Calu3 (cell line): ENCODE measurements at regions of chr14 and their contacts with region 1.

Region 1: GRCh38 chr14:54175298-54175942 is 218.8 kb upstream of the BMP4 start:
- DNase-seq: peak; percentile 80
- H3K4me3 Mint-ChIP-seq: no peak overlapping the region
- H3K27ac Mint-ChIP-seq: no peak overlapping the region
- H3K4me1 Mint-ChIP-seq: peaks cover 30% of the 10 kb centered on the region
- H3K27me3 Mint-ChIP-seq: no peaks in the 10 kb centered on the region
- CTCF ChIP-seq: peak; percentile 64

Region 2: GRCh38 chr14:53316499-53316898 is 858.9 kb before region 1 on chr14:
- CTCF ChIA-PET with region 1: no interaction called
- intact Hi-C with region 1: no loop called
- DNase-seq: no peak
- H3K4me3 Mint-ChIP-seq: no peak overlapping the region
- H3K27ac Mint-ChIP-seq: no peak overlapping the region
- H3K4me1 Mint-ChIP-seq: no peaks in the 10 kb centered on the region
- H3K27me3 Mint-ChIP-seq: no peaks in the 10 kb centered on the region
- CTCF ChIP-seq: no peak

Region 3: GRCh38 chr14:53432378-53432802 is 743.0 kb before region 1 on chr14:
- CTCF ChIA-PET with region 1: no interaction called
- intact Hi-C with region 1: loop called (anchors 1 kb)
- DNase-seq: peak; percentile 49
- H3K4me3 Mint-ChIP-seq: no peak overlapping the region
- H3K27ac Mint-ChIP-seq: no peak overlapping the region
- H3K4me1 Mint-ChIP-seq: no peaks in the 10 kb centered on the region
- H3K27me3 Mint-ChIP-seq: peaks cover 16% of the 10 kb centered on the region
- CTCF ChIP-seq: peak; percentile 69

Region 4: GRCh38 chr14:53842938-53843337 is 332.5 kb before region 1 on chr14:
- CTCF ChIA-PET with region 1: no interaction called
- intact Hi-C with region 1: loop called (anchors 10 kb)
- DNase-seq: peak; percentile 75
- H3K4me3 Mint-ChIP-seq: no peak overlapping the region
- H3K27ac Mint-ChIP-seq: peak overlapping the region; percentile 80
- H3K4me1 Mint-ChIP-seq: peaks cover 72% of the 10 kb centered on the region
- H3K27me3 Mint-ChIP-seq: no peaks in the 10 kb centered on the region
- CTCF ChIP-seq: no peak

Region 5: DNA sequence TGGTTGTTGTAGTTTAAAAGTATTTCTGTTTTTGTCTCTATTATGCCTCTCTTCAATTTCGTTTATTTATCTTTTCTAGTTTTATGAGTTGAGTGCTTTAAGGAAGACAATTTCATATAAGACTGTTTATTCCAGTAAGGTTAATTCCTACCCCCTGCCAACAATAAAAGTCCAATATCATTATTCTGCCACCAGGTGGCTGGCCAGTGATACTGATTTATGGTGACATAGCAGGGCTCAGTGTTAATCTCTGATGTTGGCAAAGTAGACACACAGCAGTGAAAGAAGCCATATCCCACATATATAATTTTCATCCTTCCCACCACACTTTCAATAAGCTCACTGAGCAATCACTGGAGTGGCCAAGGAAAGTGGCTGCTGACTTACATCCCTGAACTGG is 149.8 kb before region 1 on chr14:
- CTCF ChIA-PET with region 1: no interaction called
- intact Hi-C with region 1: loop called (anchors 1 kb)
- DNase-seq: peak; percentile 44
- H3K4me3 Mint-ChIP-seq: no peak overlapping the region
- H3K27ac Mint-ChIP-seq: no peak overlapping the region
- H3K4me1 Mint-ChIP-seq: no peaks in the 10 kb centered on the region
- H3K27me3 Mint-ChIP-seq: no peaks in the 10 kb centered on the region
- CTCF ChIP-seq: peak; percentile 49

Region 6: GRCh38 chr14:54108481-54109471 is 66.6 kb before region 1 on chr14:
- CTCF ChIA-PET with region 1: interaction called, 4 read pairs
- intact Hi-C with region 1: loop called (anchors 5 kb)
- DNase-seq: peak; percentile 39
- H3K4me3 Mint-ChIP-seq: no peak overlapping the region
- H3K27ac Mint-ChIP-seq: peak overlapping the region; percentile 61
- H3K4me1 Mint-ChIP-seq: peaks cover 41% of the 10 kb centered on the region
- H3K27me3 Mint-ChIP-seq: no peaks in the 10 kb centered on the region
- CTCF ChIP-seq: no peak

Region 7: GRCh38 chr14:54338696-54339317 is 163.4 kb after region 1 on chr14:
- CTCF ChIA-PET with region 1: no interaction called
- intact Hi-C with region 1: loop called (anchors 5 kb)
- DNase-seq: peak; percentile 12
- H3K4me3 Mint-ChIP-seq: no peak overlapping the region
- H3K27ac Mint-ChIP-seq: no peak overlapping the region
- H3K4me1 Mint-ChIP-seq: peaks cover 10% of the 10 kb centered on the region
- H3K27me3 Mint-ChIP-seq: no peaks in the 10 kb centered on the region
- CTCF ChIP-seq: peak; percentile 31

Region 8: DNA sequence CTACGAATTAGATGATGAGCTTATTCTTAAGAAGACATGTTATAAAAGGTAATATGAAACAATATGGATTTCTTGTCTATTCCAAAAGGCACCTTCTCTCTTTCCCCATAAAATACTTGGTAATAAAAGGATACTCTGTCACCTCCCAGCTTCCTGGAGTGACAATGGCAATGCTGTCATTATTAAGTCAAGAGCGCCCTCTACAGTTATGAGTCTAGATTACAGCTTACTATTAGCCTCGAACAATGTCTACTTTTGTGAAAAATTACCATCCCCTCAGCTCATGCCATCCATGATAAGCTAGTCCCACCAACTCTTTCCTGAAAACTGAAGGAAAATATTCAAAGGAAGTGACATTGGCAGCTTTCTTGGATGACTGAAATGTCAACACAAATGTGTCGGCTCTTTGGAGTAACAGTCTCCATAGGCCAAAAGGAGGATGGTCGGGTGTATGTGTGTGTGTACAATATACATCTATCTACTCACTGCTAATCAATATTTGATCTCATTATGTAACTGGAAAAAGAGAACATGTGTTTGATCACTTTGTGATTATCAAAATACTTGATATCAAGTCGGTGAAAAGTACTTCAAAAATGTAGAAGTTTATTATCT is 172.7 kb after region 1 on chr14:
- CTCF ChIA-PET with region 1: interaction called, 10 read pairs
- intact Hi-C with region 1: no loop called
- DNase-seq: peak; percentile 46
- H3K4me3 Mint-ChIP-seq: no peak overlapping the region
- H3K27ac Mint-ChIP-seq: no peak overlapping the region
- H3K4me1 Mint-ChIP-seq: peaks cover 4% of the 10 kb centered on the region
- H3K27me3 Mint-ChIP-seq: no peaks in the 10 kb centered on the region
- CTCF ChIP-seq: peak; percentile 48